ENCODE measurements at regions of chr17 and their contacts with region 1.

Region 1: GRCh38 chr17:76397687-76398487 is 13.5 kb downstream of the SPHK1 start:
- DNase-seq: peak; percentile 73 to 87 (median 79)
- H3K4me3 ChIP-seq: no peak overlapping the region
- H3K27ac ChIP-seq: no peak overlapping the region
- H3K4me1 ChIP-seq: no peaks in the 10 kb centered on the region
- H3K27me3 ChIP-seq: no peaks in the 10 kb centered on the region

Region 2: GRCh38 chr17:76208120-76208519 is 189.8 kb before region 1 on chr17:
- CTCF ChIA-PET with region 1: no interaction called
- POLR2A ChIA-PET with region 1: no interaction called
- DNase-seq: no peak
- H3K4me3 ChIP-seq: no peak overlapping the region
- H3K27ac ChIP-seq: no peak overlapping the region
- H3K4me1 ChIP-seq: no peaks in the 10 kb centered on the region
- H3K27me3 ChIP-seq: no peaks in the 10 kb centered on the region

Region 3: GRCh38 chr17:76353599-76354316 is 44.1 kb before region 1 on chr17 and contains the start of gene PRPSAP1:
- CTCF ChIA-PET with region 1: interaction called, 26 read pairs
- POLR2A ChIA-PET with region 1: interaction called, 4 read pairs
- DNase-seq: peak; percentile 86 to 92 (median 91)
- H3K4me3 ChIP-seq: peak within 1 kb of the TSS; percentile 73 to 91 (median 83)
- H3K27ac ChIP-seq: peak within 1 kb of the TSS; percentile 97 to 99
- H3K4me1 ChIP-seq: peaks cover 0 to 21% (median 17%) of the 10 kb centered on the region in 4 experiments
- H3K27me3 ChIP-seq: no peaks in the 10 kb centered on the region

Region 4: GRCh38 chr17:76370261-76370993 is 27.5 kb before region 1 on chr17:
- CTCF ChIA-PET with region 1: interaction called, 22 read pairs
- POLR2A ChIA-PET with region 1: no interaction called
- DNase-seq: peak in 1 of 3 donors; percentile 14
- H3K4me3 ChIP-seq: no peak overlapping the region
- H3K27ac ChIP-seq: no peak overlapping the region
- H3K4me1 ChIP-seq: peaks cover 0 to 5% (median 4%) of the 10 kb centered on the region in 4 experiments
- H3K27me3 ChIP-seq: no peaks in the 10 kb centered on the region

Region 5: DNA sequence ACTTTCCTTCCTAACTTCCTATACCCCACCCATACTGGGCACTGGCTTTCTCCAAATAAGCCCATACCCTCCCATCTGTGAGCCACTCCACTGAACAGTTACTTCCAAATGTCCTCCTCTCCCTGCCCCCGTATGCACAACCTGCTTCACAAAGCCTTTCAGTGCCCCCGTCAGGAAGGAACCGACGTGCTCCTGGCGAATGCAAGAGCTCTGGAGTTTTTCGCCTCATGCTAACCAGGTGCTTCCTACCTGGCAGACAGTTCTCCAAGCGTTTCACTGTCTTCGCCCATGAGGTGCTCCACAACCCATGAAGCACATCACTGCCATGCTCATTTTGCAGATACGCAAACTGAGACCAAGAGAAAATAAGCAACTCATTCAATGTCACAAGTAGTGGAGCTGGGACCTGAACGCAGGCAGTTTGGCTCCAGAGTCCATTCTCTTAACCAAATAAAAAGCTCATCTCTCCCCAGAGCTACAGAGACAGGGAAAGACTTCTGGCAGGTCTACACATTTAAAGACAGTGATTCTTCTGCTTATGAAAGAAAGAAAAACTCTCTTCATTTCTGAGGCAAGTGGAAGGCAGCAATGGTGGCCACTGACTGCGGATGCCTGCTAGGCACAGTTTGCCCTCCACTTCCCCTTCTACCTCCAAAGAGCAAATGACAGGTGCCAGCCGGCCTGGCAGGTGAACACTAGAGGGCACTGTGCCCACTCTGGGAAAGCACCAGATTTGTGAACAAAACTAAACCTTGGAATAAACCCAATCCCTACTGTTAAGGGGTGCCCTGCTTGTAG is 10.4 kb after region 1 on chr17:
- CTCF ChIA-PET with region 1: interaction called, 48 read pairs
- POLR2A ChIA-PET with region 1: no interaction called
- DNase-seq: peak; percentile 75 to 92 (median 88)
- H3K4me3 ChIP-seq: no peak overlapping the region
- H3K27ac ChIP-seq: no peak overlapping the region
- H3K4me1 ChIP-seq: peaks cover 0 to 6% (median 4%) of the 10 kb centered on the region in 4 experiments
- H3K27me3 ChIP-seq: no peaks in the 10 kb centered on the region

Region 6: DNA sequence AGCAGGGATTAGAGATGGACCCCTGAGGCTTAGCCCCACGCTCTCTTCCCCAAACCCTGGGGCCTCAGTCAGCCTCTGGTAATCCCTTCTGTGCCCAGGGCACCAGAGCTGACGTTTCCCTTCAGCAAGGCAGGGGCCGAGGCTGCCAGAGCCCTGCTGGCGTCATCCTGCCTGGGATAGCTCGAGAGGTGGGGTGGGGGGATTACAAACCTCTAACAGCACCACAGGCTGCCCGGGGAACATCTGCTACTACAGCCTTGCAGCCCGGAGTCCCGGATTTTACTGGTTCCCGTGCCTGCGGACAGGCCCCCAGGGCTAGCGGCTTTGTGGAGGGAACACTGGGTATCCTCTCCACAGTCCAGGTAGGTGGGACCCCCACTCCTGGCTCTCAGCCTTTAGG is 69.5 kb after region 1 on chr17 and contains the start of gene AANAT:
- CTCF ChIA-PET with region 1: interaction called, 12 read pairs
- POLR2A ChIA-PET with region 1: no interaction called
- DNase-seq: no peak
- H3K4me3 ChIP-seq: no peak within 1 kb of the TSS
- H3K27ac ChIP-seq: no peak within 1 kb of the TSS
- H3K4me1 ChIP-seq: peaks cover 0 to 4% (median 1%) of the 10 kb centered on the region in 4 experiments
- H3K27me3 ChIP-seq: no peaks in the 10 kb centered on the region

Region 7: DNA sequence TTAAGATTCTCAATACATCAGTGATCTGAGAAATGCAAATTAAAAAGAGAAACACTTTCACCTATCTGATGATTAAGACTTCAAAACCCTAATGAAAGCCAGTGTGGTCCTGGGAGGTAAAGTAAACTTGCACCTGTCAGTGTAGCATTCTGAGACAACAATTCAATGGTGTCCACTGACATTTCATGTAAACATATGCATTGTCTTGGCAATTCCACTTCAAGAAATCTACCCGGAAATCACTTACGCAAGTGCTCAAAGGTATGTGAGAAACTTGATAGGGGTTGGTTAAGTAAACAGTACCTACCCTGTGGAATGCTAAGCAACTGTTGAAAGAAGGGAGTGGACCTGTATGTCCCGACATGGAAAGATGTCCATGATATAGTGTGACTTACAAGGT is 243.6 kb after region 1 on chr17:
- CTCF ChIA-PET with region 1: no interaction called
- POLR2A ChIA-PET with region 1: no interaction called
- DNase-seq: no peak
- H3K4me3 ChIP-seq: no peak overlapping the region
- H3K27ac ChIP-seq: peak overlapping the region in 1 of 2 experiments; percentile 65
- H3K4me1 ChIP-seq: no peaks in the 10 kb centered on the region
- H3K27me3 ChIP-seq: no peaks in the 10 kb centered on the region

Measured in common myeloid progenitor, CD34-positive (primary cell).